ENCODE measurements at regions of chr1 and their contacts with region 1.

Region 1: DNA sequence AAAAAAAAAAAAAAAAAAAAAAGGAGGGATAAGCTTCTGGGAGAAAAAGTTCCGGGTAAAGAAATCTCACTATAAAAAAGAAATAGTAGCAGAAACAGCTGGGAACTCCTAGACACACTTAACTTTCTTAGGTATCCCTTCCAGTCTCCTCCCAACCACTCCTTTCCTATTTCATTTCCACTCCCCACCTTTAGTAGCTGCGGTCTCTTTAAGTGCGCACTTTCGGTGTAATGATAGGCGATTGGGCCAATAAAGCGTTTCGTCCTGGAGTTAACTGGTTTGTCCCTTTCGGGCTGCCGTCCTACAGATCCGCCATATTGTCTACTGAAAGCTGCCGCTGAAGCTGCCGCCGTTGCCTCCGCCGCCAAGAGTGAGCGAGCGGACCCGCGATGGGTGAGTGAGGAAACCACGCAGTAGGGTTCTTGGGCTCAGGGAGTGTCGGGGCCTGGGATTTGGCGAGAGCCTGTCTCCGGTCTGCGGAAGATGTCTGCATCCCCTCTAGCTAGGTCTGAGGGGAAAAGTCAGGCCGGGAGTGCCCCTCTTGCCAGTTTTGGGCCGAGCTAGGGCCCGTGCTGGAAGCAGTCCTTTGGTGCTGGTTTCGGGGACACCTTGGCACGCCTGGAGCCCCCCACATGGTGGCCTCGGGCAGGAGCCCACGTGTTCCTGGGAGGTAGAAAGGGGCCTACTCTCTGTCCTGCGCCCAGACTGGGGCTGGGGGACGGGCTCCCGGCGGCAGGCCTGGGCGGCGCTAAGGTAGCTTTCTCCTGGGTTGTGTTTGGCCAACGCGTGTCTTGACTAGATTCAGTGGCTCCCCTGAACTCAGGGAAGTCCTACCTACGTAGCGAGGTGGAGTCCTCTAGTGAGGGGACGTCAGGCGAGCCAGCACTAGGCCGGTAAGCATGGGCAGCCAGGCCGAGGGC is at the start of gene KPNA6:
- DNase-seq: peak; percentile 85
- CTCF ChIP-seq: no peak

Region 2: GRCh38 chr1:32072622-32073298 is 35.2 kb before region 1 on chr1 and contains the start of gene TMEM39B:
- CTCF ChIA-PET with region 1: interaction called, 24 read pairs
- POLR2A ChIA-PET with region 1: interaction called, 9 read pairs
- DNase-seq: peak; percentile 98
- CTCF ChIP-seq: no peak

Region 3: GRCh38 chr1:32122151-32122550 is 14.1 kb after region 1 on chr1:
- CTCF ChIA-PET with region 1: interaction called, 45 read pairs
- POLR2A ChIA-PET with region 1: no interaction called
- DNase-seq: peak; percentile 38
- CTCF ChIP-seq: no peak

Region 4: GRCh38 chr1:32127409-32128198 is 19.6 kb after region 1 on chr1:
- CTCF ChIA-PET with region 1: interaction called, 45 read pairs
- POLR2A ChIA-PET with region 1: no interaction called
- DNase-seq: no peak
- CTCF ChIP-seq: no peak

Region 5: GRCh38 chr1:32142446-32143301 is 34.7 kb after region 1 on chr1:
- CTCF ChIA-PET with region 1: no interaction called
- POLR2A ChIA-PET with region 1: no interaction called
- DNase-seq: no peak
- CTCF ChIP-seq: no peak

Region 6: DNA sequence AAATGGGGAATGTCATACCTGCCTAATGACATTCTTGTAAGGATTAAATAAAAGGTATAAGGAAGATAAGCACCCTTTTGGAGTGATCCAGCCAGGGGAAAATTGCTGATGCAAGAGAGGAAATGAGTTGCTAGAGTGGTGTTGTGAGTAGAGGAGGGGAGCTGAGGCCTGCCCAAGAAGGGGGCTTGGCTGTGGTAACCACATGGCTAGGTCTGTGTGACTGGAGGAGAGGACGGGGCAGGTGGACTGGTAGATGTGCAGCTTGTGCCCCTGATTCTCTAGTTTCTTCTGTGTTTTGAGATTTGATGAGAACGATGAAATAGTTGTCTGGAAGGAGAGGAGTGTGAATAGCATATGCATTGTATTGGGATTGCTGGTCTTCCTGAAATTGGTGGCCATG is 78.1 kb after region 1 on chr1:
- CTCF ChIA-PET with region 1: no interaction called
- POLR2A ChIA-PET with region 1: interaction called, 10 read pairs
- DNase-seq: no peak
- CTCF ChIP-seq: no peak

Measured in GM10248 (cell line).